ENCODE measurements at regions of chr7 and their contacts with region 1.

Region 1: DNA sequence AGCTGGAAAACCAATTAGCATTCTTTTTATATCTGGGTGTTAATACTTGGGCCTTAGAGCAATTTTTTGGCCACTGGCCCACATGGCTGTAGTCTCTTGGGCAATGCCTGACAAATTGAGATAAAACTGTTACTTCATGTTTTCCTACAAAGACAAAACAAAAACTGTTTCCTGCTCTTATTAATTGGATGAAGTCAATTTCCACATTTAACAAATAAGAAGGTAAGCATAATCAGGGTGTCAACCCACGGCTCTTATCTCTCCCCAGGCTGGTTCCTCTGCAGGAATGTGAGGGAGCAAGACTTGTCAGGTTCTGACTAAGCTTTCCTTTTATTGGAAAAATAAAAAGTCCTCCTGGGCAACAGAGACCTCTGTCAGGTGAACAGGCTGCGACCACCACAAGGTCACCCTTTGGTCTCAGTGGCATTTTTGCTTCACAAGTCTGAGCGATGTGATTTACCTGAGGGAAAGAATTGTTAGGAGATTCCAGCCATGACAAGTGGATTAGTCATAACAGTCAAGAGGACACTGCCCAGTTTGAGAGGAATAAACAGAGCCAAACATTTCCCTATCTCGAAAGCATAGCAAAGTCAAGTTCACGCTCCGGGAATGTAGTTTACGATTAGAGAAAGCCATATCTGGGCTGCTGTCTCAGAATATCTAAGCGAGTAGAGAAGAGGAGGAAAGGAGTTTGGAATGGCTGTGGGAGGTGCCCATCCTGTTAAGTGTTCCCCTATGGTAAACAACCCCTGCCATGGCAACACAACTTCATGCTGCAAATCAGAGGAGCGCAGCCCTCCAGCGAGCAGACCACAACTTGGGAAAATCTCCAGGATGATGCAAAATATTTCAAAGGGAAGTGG is 144.4 kb downstream of the TES start:
- DNase-seq: peak; percentile 67 to 88
- ATAC-seq: peak; percentile 75 to 86 (median 83)
- H3K4me3 ChIP-seq: peak overlapping the region in 6 of 10 donors; percentile 21 to 39 (median 30)
- H3K27ac ChIP-seq: peak overlapping the region; percentile 76 to 94 (median 86)
- H3K4me1 ChIP-seq: peaks cover 12 to 73% (median 61%) of the 10 kb centered on the region in 9 donors
- H3K27me3 ChIP-seq: no peaks in the 10 kb centered on the region
- CTCF ChIP-seq: no peak

Region 2: GRCh38 chr7:116258734-116259133 is 96.0 kb before region 1 on chr7:
- intact Hi-C with region 1: loop called in 3 of 10 experiments (anchors 5 to 10 kb)
- DNase-seq: peak in 1 of 2 donors; percentile 26
- ATAC-seq: peak in 6 of 8 donors; percentile 67 to 79 (median 72)
- H3K4me3 ChIP-seq: no peak overlapping the region
- H3K27ac ChIP-seq: peak overlapping the region in 6 of 10 donors; percentile 0 to 42 (median 28)
- H3K4me1 ChIP-seq: peaks cover 0 to 15% (median 5%) of the 10 kb centered on the region in 9 donors
- H3K27me3 ChIP-seq: no peaks in the 10 kb centered on the region
- CTCF ChIP-seq: peak; percentile 59 to 89 (median 85)

Region 3: GRCh38 chr7:116395125-116395791 is 40.5 kb after region 1 on chr7:
- intact Hi-C with region 1: loop called in 2 of 10 experiments (anchors 1 to 2 kb)
- DNase-seq: no peak
- ATAC-seq: peak in 5 of 8 donors; percentile 14 to 54 (median 48)
- H3K4me3 ChIP-seq: no peak overlapping the region
- H3K27ac ChIP-seq: peak overlapping the region in 8 of 10 donors; percentile 19 to 75 (median 51)
- H3K4me1 ChIP-seq: peaks cover 3 to 50% (median 30%) of the 10 kb centered on the region in 9 donors
- H3K27me3 ChIP-seq: no peaks in the 10 kb centered on the region
- CTCF ChIP-seq: no peak

Region 4: DNA sequence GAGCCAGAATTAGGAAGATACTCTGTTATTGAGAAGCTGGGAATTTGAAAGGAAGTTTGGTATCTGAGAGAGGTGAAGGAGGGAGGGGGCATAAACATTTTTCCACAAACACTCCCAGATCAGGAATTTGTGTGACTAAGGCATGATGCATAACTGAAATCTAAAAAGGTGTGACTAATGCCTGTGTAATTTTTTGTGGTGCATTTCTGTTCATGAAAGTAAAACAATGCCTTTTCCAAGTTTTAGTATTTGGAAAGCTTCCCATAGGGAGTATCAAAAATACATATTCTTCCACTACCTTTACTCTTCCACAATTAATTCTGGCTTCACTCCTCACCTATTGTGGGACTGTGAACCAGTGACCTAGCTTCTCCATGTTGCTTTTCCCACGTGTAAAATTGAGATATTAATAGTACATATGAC is 88.3 kb after region 1 on chr7:
- intact Hi-C with region 1: loop called in 4 of 10 experiments (anchors 2 to 10 kb)
- DNase-seq: no peak
- ATAC-seq: peak in 3 of 8 donors; percentile 17 to 50 (median 19)
- H3K4me3 ChIP-seq: no peak overlapping the region
- H3K27ac ChIP-seq: peak overlapping the region in 7 of 10 donors; percentile 11 to 79 (median 50)
- H3K4me1 ChIP-seq: peaks cover 7 to 76% (median 36%) of the 10 kb centered on the region in 9 donors
- H3K27me3 ChIP-seq: no peaks in the 10 kb centered on the region
- CTCF ChIP-seq: no peak

Region 5: DNA sequence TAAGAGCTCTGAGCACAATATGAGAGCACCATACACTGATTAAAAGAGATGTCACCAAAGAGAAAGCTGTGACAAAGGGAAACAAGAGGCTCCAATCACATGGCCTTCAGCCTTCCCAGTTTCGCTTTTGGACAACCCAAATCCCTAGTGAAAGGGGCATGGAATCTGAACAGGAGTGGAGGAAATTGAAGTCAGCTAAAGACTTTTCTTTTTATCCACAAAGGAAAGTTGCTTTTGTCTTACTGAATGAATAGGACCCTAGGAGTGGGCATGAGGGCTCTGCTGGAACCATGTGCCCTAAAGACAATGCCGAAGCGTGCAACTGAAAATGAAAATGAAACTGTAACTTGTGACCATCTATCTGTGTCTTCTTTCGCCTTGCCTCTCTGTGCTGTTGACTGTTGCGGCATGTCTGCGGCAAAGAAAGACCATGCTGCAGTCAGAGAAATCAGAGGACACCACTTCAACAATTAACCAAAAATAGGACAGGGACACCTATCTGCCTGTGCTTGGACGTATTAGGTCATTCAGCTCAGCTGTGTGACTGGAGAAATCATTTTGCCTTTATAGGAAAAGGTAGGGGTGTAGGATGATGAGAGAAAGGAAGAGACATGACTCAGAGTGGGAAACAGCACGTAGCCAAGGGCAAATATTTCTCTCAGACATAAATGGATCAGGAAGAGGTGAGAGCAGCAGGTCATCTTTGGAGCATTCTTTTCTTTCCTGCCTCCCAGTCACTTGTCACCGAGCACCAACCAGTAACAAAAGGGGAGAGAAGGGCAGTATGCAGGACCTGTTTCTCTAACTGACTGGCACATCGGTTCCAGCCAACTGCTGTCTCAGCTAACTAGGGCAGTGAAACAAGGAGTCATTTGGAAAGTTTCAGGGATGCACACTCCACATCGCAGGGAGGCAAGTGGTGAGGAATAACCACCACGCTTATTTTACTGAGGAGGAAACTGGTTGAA is 157.1 kb after region 1 on chr7:
- intact Hi-C with region 1: loop called in 2 of 10 experiments (anchors 5 kb)
- DNase-seq: peak in 1 of 2 donors; percentile 58
- ATAC-seq: peak; percentile 74 to 93 (median 89)
- H3K4me3 ChIP-seq: peak overlapping the region; percentile 19 to 56 (median 48)
- H3K27ac ChIP-seq: peak overlapping the region; percentile 66 to 93 (median 85)
- H3K4me1 ChIP-seq: peaks cover 14 to 73% (median 41%) of the 10 kb centered on the region in 9 donors
- H3K27me3 ChIP-seq: no peaks in the 10 kb centered on the region
- CTCF ChIP-seq: no peak

Region 6: GRCh38 chr7:116576350-116577319 is 221.9 kb after region 1 on chr7:
- intact Hi-C with region 1: loop called in 4 of 10 experiments (anchors 5 to 10 kb)
- DNase-seq: no peak
- ATAC-seq: peak; percentile 31 to 84 (median 61)
- H3K4me3 ChIP-seq: no peak overlapping the region
- H3K27ac ChIP-seq: peak overlapping the region; percentile 8 to 81 (median 52)
- H3K4me1 ChIP-seq: peaks cover 0 to 62% (median 41%) of the 10 kb centered on the region in 9 donors
- H3K27me3 ChIP-seq: no peaks in the 10 kb centered on the region
- CTCF ChIP-seq: peak in 1 of 9 donors; percentile 7

Region 7: DNA sequence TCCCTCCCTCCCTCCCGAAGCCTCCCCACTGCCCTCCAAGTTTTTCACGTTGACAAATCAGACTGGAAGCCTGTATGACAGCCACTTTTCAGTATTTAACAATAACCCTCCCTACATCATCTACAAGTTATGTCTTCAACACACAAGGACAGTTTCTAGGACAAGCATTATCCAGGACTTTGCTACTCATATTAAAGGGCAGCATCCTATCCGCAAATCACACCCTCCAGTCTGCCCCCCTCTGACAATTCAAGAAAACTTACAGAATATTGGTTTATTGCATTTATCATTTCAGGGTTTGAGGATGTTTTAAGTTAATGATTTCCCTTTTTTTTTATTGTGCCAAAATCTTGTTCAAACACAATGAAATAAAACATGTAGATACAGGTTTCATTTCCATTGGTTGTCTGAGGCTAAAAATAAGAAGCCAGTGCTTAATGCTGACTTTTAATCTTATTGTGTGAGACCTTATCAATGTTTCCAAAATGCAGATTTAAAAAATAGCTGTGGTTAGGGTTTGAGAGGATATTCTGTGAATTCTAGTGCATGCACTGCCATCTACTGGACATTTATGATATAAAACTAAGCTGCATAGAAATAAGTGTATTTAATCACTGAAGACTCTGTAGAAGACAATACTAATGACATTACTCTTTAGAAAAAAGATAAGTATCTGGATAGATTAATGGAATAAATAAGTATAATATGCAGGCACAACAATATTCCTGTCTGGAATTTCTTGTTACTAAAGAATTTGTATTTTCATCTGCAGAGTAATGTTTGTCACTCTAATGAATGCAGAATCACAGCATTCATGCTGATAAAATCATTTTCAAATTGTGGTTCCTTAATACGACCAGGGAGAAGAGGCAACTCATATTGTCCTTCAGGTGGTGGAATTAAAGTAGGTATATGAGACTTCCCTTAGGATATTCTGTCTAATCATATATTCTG is 234.1 kb after region 1 on chr7:
- intact Hi-C with region 1: loop called in 5 of 10 experiments (anchors 5 to 10 kb)
- DNase-seq: no peak
- ATAC-seq: peak in 7 of 8 donors; percentile 39 to 74 (median 65)
- H3K4me3 ChIP-seq: no peak overlapping the region
- H3K27ac ChIP-seq: peak overlapping the region in 7 of 10 donors; percentile 42 to 71 (median 51)
- H3K4me1 ChIP-seq: peaks cover 0 to 43% (median 34%) of the 10 kb centered on the region in 9 donors
- H3K27me3 ChIP-seq: peaks cover 0 to 19% (median 0%) of the 10 kb centered on the region in 7 donors
- CTCF ChIP-seq: peak; percentile 47 to 87 (median 74)

Measured in heart right ventricle (tissue), 16 donors.